B cell (primary cell): ENCODE measurements at regions of chr1 and their contacts with region 1.

Region 1: DNA sequence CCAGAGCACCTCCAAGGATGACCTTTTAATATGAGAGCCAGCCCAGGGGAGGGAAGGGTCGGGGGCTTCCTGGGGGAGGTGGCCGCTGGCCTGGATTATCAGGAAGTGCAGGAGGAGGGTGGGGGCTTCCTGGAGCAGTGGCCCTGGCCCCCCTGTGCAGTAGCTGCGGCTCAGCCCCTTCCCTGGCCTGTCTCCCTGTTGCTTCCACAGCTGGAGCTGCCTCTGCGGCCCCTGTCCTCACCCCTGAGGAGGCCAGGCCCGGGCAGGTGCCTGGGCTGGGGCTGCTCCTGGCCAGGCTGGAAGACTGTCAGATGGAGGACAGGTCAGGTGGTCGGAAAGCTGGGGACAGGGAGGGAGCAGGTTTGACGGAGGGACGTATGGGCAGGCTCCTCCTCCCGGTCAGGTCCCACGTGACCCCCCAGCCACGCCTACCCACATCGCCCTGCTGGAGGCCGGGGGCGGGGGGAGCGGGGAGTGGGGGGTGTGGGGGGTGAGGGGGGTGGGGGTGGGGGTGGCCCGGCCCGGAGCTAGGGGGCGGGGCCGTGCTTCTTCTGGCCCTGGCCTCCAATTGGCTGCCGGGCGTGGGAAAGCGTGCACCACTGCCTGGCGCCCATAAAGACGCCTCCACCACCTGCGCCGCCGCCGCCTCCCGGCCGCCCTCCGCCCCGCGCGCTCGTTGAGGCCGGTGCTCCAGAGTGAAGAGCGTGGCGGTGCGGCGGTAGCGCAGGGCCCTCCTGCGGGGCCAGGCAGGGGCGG is 10.2 kb upstream of the TNFRSF14 start:
- DNase-seq: peak; percentile 95
- ATAC-seq: peak; percentile 52
- H3K4me3 ChIP-seq: peak overlapping the region in 4 of 5 experiments; percentile 69 to 89 (median 76)
- H3K4me3 Mint-ChIP-seq: peak overlapping the region; percentile 92
- H3K27ac ChIP-seq: peak overlapping the region; percentile 99 to 100
- H3K27ac Mint-ChIP-seq: peak overlapping the region; percentile 98
- H3K4me1 ChIP-seq: peaks cover 34 to 47% of the 10 kb centered on the region in 2 donors
- H3K4me1 Mint-ChIP-seq: peaks cover 33% of the 10 kb centered on the region
- H3K27me3 ChIP-seq: peaks cover 0 to 16% (median 2%) of the 10 kb centered on the region in 4 experiments
- H3K27me3 Mint-ChIP-seq: peaks cover 6% of the 10 kb centered on the region
- CTCF ChIP-seq: no peak

Region 2: GRCh38 chr1:2133039-2133878 is 412.7 kb before region 1 on chr1:
- CTCF ChIA-PET with region 1: no interaction called
- POLR2A ChIA-PET with region 1: no interaction called
- intact Hi-C with region 1: loop called (anchors 2 kb)
- DNase-seq: peak; percentile 98
- ATAC-seq: peak; percentile 91
- H3K4me3 ChIP-seq: peak overlapping the region; percentile 16 to 64 (median 56)
- H3K4me3 Mint-ChIP-seq: peak overlapping the region; percentile 88
- H3K27ac ChIP-seq: peak overlapping the region; percentile 80 to 82
- H3K27ac Mint-ChIP-seq: peak overlapping the region; percentile 91
- H3K4me1 ChIP-seq: peaks cover 10 to 19% of the 10 kb centered on the region in 2 donors
- H3K4me1 Mint-ChIP-seq: peaks cover 23% of the 10 kb centered on the region
- H3K27me3 ChIP-seq: no peaks in the 10 kb centered on the region
- H3K27me3 Mint-ChIP-seq: no peaks in the 10 kb centered on the region
- CTCF ChIP-seq: no peak

Region 3: GRCh38 chr1:2300851-2301606 is 244.9 kb before region 1 on chr1:
- CTCF ChIA-PET with region 1: no interaction called
- POLR2A ChIA-PET with region 1: no interaction called
- intact Hi-C with region 1: loop called (anchors 1 kb)
- DNase-seq: peak; percentile 99
- ATAC-seq: peak; percentile 80
- H3K4me3 ChIP-seq: peak overlapping the region in 4 of 5 experiments; percentile 65 to 78 (median 70)
- H3K4me3 Mint-ChIP-seq: peak overlapping the region; percentile 93
- H3K27ac ChIP-seq: peak overlapping the region; percentile 99
- H3K27ac Mint-ChIP-seq: peak overlapping the region; percentile 99
- H3K4me1 ChIP-seq: peaks cover 40 to 56% of the 10 kb centered on the region in 2 donors
- H3K4me1 Mint-ChIP-seq: peaks cover 55% of the 10 kb centered on the region
- H3K27me3 ChIP-seq: no peaks in the 10 kb centered on the region
- H3K27me3 Mint-ChIP-seq: no peaks in the 10 kb centered on the region
- CTCF ChIP-seq: no peak

Region 4: GRCh38 chr1:2352840-2353550 is 192.9 kb before region 1 on chr1:
- CTCF ChIA-PET with region 1: no interaction called
- POLR2A ChIA-PET with region 1: no interaction called
- intact Hi-C with region 1: no loop called
- DNase-seq: no peak
- ATAC-seq: no peak
- H3K4me3 ChIP-seq: no peak overlapping the region
- H3K4me3 Mint-ChIP-seq: no peak overlapping the region
- H3K27ac ChIP-seq: no peak overlapping the region
- H3K27ac Mint-ChIP-seq: no peak overlapping the region
- H3K4me1 ChIP-seq: no peaks in the 10 kb centered on the region
- H3K4me1 Mint-ChIP-seq: no peaks in the 10 kb centered on the region
- H3K27me3 ChIP-seq: no peaks in the 10 kb centered on the region
- H3K27me3 Mint-ChIP-seq: no peaks in the 10 kb centered on the region
- CTCF ChIP-seq: no peak

Region 5: DNA sequence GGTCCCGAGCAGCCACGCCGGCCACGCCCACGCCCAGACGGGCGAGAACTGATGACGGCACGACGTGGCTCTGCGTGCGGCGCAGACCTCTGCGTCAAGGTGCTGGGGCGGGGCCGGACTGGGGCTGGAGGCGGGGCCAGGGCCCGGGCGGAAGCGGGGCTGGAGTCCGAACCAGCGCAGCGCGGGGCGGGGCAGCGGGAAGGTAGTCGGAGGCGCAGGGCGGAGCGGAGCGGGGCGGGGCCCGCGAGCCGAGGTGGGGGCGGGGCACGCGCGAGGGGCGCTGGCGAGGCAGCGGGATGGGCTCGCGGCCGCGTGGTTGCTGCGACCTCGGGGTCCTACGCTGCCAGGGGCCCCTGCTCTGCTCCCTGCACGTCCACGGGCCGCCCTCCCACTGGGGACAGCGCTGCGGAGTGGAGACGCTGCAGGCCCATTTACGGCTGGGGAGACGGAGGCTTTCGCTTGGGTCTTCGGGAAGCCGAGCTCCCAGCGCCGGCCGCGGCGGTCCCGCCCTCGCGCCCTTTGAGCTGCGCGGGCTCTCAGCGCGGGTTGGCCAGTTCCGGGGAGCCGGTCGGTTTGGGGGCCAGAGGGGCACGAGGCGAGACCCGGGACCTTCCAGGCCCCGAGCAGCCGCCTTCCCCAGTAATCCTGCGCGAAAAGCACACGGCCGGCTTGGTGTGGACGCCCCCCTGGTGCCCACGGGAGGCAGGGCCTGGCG is 133.3 kb before region 1 on chr1 and contains the start of gene PEX10:
- CTCF ChIA-PET with region 1: interaction called, 53 read pairs
- POLR2A ChIA-PET with region 1: interaction called, 9 read pairs
- intact Hi-C with region 1: no loop called
- DNase-seq: peak; percentile 98
- ATAC-seq: peak; percentile 94
- H3K4me3 ChIP-seq: peak within 1 kb of the TSS; percentile 19 to 78 (median 69)
- H3K4me3 Mint-ChIP-seq: peak within 1 kb of the TSS; percentile 89
- H3K27ac ChIP-seq: peak within 1 kb of the TSS; percentile 52 to 90
- H3K27ac Mint-ChIP-seq: peak within 1 kb of the TSS; percentile 92
- H3K4me1 ChIP-seq: peaks cover 45 to 51% of the 10 kb centered on the region in 2 donors
- H3K4me1 Mint-ChIP-seq: peaks cover 43% of the 10 kb centered on the region
- H3K27me3 ChIP-seq: no peaks in the 10 kb centered on the region
- H3K27me3 Mint-ChIP-seq: no peaks in the 10 kb centered on the region
- CTCF ChIP-seq: no peak
- total RNA-seq, gene PEX10: 16.5 and 18.4 TPM in 2 replicates

Region 6: DNA sequence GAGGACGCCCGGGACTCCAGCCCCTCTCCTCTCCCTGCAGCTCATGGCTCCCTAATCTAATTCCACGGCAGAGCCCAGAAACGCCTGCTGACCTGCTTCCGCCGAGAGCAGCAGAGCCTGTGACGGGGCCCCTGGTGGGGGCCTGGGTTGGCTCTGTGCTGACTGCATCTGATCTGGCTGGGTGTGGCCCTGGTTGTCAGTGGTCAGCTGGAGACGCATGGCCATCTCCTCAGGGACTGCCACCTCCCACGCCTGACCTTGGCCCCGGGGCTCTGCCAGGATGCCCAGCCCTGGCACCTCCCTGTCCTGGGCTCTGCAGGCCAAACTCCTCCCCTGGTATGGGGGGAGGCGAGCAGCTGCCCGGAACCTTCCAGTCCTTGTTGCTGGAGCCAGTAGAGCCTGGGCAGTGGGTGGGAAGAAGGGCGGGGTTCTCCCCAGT is 71.0 kb before region 1 on chr1:
- CTCF ChIA-PET with region 1: no interaction called
- POLR2A ChIA-PET with region 1: no interaction called
- intact Hi-C with region 1: no loop called
- DNase-seq: no peak
- ATAC-seq: no peak
- H3K4me3 ChIP-seq: no peak overlapping the region
- H3K4me3 Mint-ChIP-seq: no peak overlapping the region
- H3K27ac ChIP-seq: no peak overlapping the region
- H3K27ac Mint-ChIP-seq: no peak overlapping the region
- H3K4me1 ChIP-seq: peaks cover 12% of the 10 kb centered on the region in 2 donors
- H3K4me1 Mint-ChIP-seq: peaks cover 9% of the 10 kb centered on the region
- H3K27me3 ChIP-seq: no peaks in the 10 kb centered on the region
- H3K27me3 Mint-ChIP-seq: no peaks in the 10 kb centered on the region
- CTCF ChIP-seq: no peak

Region 7: DNA sequence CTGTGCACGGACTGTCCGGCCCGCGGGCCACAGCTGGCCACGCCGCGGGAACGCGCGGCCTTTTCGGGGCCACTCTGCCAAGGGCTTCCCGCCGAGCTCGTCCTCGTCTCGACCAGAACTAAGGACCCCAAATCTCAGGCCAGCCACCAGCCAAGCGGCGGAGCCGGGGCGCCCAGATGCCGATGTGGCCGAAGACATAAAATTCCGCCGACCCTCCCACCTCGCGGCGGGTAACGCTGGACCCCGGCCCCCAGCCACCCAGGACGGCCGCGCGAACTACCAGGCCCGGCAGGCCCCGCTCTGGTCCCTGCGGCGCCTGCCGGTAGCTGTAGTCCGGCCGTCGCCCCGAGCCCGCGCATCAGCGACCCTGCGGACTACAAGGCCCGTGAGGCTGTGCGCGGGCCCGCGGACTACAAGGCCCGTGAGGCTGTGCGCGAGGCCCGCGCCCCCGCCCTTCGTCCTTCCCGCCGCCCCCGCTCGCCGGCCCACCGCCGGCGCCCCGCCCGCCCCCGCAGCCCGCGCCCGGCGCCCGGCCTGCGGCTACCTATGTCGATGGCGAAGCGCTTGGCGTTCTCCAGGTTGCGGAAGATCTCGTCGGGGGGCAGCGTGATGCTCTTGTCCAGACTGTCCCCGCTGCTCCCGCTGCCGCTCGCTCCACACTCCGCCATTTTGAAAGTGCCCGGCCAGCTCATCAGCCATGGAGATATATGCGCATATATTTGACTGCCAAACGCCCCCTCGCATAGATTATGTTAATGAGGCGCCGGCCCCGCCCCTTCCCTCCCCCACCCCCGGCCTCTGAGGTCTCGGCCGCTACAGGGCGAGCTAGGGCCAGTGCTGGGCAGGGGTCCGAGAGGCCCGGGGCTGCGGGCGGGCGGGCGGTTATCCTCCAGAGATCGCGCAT is 19.8 kb before region 1 on chr1 and contains the start of gene PANK4:
- CTCF ChIA-PET with region 1: interaction called, 20 read pairs
- POLR2A ChIA-PET with region 1: interaction called, 22 read pairs
- intact Hi-C with region 1: loop called (anchors 1 kb)
- DNase-seq: peak; percentile 94
- ATAC-seq: peak; percentile 91
- H3K4me3 ChIP-seq: peak within 1 kb of the TSS; percentile 48 to 96 (median 74)
- H3K4me3 Mint-ChIP-seq: peak within 1 kb of the TSS; percentile 96
- H3K27ac ChIP-seq: peak within 1 kb of the TSS; percentile 41 to 78
- H3K27ac Mint-ChIP-seq: peak within 1 kb of the TSS; percentile 85
- H3K4me1 ChIP-seq: peaks cover 41 to 53% of the 10 kb centered on the region in 2 donors
- H3K4me1 Mint-ChIP-seq: peaks cover 43% of the 10 kb centered on the region
- H3K27me3 ChIP-seq: peaks cover 0 to 24% (median 10%) of the 10 kb centered on the region in 4 experiments
- H3K27me3 Mint-ChIP-seq: no peaks in the 10 kb centered on the region
- CTCF ChIP-seq: no peak
- total RNA-seq, gene PANK4: 80.5 and 86.3 TPM in 2 replicates

Region 8: DNA sequence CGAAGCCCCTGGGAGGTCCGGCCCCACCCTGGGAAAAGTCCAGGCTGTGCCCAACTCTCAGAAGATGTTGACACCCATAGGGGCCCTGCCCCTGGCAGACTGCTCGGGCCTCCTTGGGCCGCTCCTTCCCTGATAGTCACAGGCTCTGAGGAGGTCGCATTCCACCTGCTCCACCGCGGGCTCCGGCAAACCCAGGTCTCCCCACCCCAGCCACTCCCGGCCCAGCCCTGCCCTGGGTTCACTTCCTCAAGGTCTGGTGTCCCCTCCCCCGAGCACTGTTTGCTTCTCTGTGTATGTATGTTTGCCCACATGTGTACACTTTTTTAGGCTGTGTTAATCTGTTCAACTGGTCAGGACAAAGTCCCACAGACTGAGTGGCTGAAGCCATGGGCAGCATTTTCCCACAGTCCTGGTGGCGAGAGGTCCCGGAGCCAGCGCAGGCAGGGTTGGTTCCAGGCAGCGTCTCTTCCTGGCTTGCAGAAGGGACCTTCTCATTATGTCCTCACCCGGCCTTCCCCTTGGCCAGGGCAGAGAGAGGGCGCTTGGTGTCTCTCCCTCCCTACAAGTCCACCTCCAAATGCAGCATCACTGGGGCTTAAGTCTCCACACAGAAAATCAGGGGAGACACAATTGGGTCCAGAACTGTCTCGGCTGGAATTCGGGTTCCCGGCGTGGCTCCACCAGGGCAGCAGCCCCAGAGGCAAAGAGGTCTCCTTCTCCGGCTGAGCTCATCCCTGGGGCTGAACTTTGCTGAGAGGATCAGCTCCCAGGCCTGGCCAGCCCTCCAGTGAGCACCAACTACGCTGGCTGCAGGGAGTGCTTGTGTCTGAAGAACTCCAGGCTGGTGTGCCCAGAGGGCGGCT is 30.1 kb after region 1 on chr1:
- CTCF ChIA-PET with region 1: interaction called, 9 read pairs
- POLR2A ChIA-PET with region 1: interaction called, 35 read pairs
- intact Hi-C with region 1: no loop called
- DNase-seq: peak; percentile 66
- ATAC-seq: no peak
- H3K4me3 ChIP-seq: peak overlapping the region in 2 of 5 experiments; percentile 46 to 59
- H3K4me3 Mint-ChIP-seq: peak overlapping the region; percentile 83
- H3K27ac ChIP-seq: peak overlapping the region; percentile 21 to 100
- H3K27ac Mint-ChIP-seq: peak overlapping the region; percentile 98
- H3K4me1 ChIP-seq: peaks cover 46 to 59% of the 10 kb centered on the region in 2 donors
- H3K4me1 Mint-ChIP-seq: peaks cover 61% of the 10 kb centered on the region
- H3K27me3 ChIP-seq: no peaks in the 10 kb centered on the region
- H3K27me3 Mint-ChIP-seq: no peaks in the 10 kb centered on the region
- CTCF ChIP-seq: no peak